Activated T-helper 1 cell treated with anti-CD3 and anti-CD28 coated beads, Interleukin-12 subunit alpha, Interleukin-12 subunit beta, Interleukin-2, Interleukin-4 antibody, amounts not matched to agents 30 ng/mL and 10 ng/mL and 1 ng/mL, durations not matched to agents 14 hours and 24 hours and 36 hours (primary cell): ENCODE measurements at regions of chr12 and their contacts with region 1.

Region 1: DNA sequence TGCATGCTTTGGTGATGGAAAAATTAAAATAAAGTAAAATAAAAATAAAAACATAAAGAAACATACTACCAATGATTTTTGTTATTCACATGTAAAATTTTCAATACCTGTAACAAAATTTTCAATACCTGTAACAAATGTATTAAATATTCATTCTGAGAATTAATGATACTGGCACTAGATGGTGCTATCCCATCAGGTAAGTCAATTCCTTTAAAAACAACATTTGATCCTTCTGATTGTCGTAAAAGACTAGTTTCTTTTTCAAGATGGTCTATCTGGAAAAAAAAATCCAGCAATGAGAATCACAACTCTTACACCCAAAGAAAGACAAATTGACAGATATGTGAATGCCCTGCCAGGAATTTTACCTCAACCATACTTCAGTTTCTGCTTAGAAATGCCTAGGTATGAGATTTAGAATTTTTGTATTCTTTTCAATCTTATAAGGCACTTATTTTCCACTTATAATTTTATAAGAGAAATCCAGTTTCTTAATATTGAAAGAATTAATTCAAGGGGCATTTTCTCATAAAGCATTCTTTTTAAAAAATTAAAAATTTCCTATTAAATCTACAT is 30.7 kb downstream of the CEP290 start:
- DNase-seq: no peak
- H3K4me3 Mint-ChIP-seq: no peak overlapping the region
- H3K27ac Mint-ChIP-seq: no peak overlapping the region
- H3K4me1 Mint-ChIP-seq: no peaks in the 10 kb centered on the region
- H3K27me3 Mint-ChIP-seq: no peaks in the 10 kb centered on the region

Region 2: DNA sequence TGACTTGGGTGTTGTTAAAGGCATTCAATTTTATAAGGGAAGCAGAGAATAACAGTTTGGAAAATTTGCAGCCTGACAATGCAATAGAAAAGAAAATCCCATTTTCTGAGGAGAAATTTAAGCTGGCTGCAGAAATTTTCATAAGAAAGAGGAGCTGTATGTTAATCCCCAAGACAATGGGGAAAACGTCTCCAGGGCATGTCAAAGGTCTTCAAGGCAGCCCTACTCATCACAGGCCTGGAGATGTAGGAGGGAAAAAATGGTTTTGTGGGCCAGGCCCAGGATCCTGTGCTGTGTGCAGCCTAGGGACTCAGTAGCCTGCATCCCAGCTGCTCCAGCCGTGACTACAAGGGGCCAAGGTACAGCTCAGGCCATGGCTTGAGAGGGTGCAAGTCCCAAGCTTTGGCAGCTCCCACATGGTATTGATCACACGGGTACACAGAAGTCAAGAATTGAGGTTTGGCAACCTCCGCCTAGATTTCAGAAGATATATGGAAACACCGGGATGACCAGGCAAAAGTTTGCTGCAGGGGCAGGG is 928.4 kb before region 1 on chr12:
- intact Hi-C with region 1: no loop called
- DNase-seq: no peak
- H3K4me3 Mint-ChIP-seq: no peak overlapping the region
- H3K27ac Mint-ChIP-seq: no peak overlapping the region
- H3K4me1 Mint-ChIP-seq: no peaks in the 10 kb centered on the region
- H3K27me3 Mint-ChIP-seq: no peaks in the 10 kb centered on the region

Region 3: GRCh38 chr12:88241862-88242570 is 130.9 kb after region 1 on chr12:
- intact Hi-C with region 1: no loop called
- DNase-seq: no peak
- H3K4me3 Mint-ChIP-seq: no peak overlapping the region
- H3K27ac Mint-ChIP-seq: peak overlapping the region; percentile 75
- H3K4me1 Mint-ChIP-seq: peaks cover 28% of the 10 kb centered on the region
- H3K27me3 Mint-ChIP-seq: no peaks in the 10 kb centered on the region

Region 4: DNA sequence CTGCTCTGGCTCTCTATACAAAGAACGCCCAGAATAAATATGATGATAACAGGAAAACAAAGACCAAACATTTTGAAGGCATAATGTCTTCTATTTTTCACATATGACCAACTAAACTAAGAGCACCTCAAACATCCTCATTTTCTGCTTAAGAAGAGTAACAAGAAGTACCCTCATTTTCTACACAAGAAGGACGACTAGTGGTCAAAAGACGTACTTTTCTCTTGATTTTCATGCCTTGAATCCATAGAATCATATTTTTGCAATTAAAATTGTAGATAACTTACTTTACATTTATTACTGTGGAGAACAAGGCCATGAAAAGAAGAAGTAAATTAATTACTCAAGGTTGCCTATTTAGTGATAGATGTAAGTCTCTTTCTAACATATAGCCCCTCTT is 882.5 kb after region 1 on chr12:
- intact Hi-C with region 1: loop called (anchors 5 kb)
- DNase-seq: no peak
- H3K4me3 Mint-ChIP-seq: no peak overlapping the region
- H3K27ac Mint-ChIP-seq: no peak overlapping the region
- H3K4me1 Mint-ChIP-seq: no peaks in the 10 kb centered on the region
- H3K27me3 Mint-ChIP-seq: peaks cover 21% of the 10 kb centered on the region